ENCODE measurements at regions of chr1 and their contacts with region 1.

Region 1: GRCh38 chr1:93692983-93693591 is 11.4 kb upstream of the BCAR3 start:
- DNase-seq: peak; percentile 77
- H3K4me3 Mint-ChIP-seq: no peak overlapping the region
- H3K27ac Mint-ChIP-seq: peak overlapping the region; percentile 57
- H3K4me1 Mint-ChIP-seq: peaks cover 15% of the 10 kb centered on the region
- H3K27me3 Mint-ChIP-seq: peaks cover 11% of the 10 kb centered on the region

Region 2: GRCh38 chr1:93033785-93034184 is 659.3 kb before region 1 on chr1:
- CTCF ChIA-PET with region 1: no interaction called
- intact Hi-C with region 1: loop called (anchors 10 kb)
- DNase-seq: no peak
- H3K4me3 Mint-ChIP-seq: no peak overlapping the region
- H3K27ac Mint-ChIP-seq: no peak overlapping the region
- H3K4me1 Mint-ChIP-seq: peaks cover 29% of the 10 kb centered on the region
- H3K27me3 Mint-ChIP-seq: no peaks in the 10 kb centered on the region

Region 3: GRCh38 chr1:93471911-93472310 is 221.2 kb before region 1 on chr1:
- CTCF ChIA-PET with region 1: no interaction called
- intact Hi-C with region 1: no loop called
- DNase-seq: no peak
- H3K4me3 Mint-ChIP-seq: no peak overlapping the region
- H3K27ac Mint-ChIP-seq: no peak overlapping the region
- H3K4me1 Mint-ChIP-seq: no peaks in the 10 kb centered on the region
- H3K27me3 Mint-ChIP-seq: peaks cover 4% of the 10 kb centered on the region

Region 4: GRCh38 chr1:93607814-93608186 is 85.3 kb before region 1 on chr1:
- CTCF ChIA-PET with region 1: no interaction called
- intact Hi-C with region 1: loop called (anchors 1 kb)
- DNase-seq: peak; percentile 78
- H3K4me3 Mint-ChIP-seq: no peak overlapping the region
- H3K27ac Mint-ChIP-seq: no peak overlapping the region
- H3K4me1 Mint-ChIP-seq: peaks cover 25% of the 10 kb centered on the region
- H3K27me3 Mint-ChIP-seq: peaks cover 21% of the 10 kb centered on the region

Region 5: DNA sequence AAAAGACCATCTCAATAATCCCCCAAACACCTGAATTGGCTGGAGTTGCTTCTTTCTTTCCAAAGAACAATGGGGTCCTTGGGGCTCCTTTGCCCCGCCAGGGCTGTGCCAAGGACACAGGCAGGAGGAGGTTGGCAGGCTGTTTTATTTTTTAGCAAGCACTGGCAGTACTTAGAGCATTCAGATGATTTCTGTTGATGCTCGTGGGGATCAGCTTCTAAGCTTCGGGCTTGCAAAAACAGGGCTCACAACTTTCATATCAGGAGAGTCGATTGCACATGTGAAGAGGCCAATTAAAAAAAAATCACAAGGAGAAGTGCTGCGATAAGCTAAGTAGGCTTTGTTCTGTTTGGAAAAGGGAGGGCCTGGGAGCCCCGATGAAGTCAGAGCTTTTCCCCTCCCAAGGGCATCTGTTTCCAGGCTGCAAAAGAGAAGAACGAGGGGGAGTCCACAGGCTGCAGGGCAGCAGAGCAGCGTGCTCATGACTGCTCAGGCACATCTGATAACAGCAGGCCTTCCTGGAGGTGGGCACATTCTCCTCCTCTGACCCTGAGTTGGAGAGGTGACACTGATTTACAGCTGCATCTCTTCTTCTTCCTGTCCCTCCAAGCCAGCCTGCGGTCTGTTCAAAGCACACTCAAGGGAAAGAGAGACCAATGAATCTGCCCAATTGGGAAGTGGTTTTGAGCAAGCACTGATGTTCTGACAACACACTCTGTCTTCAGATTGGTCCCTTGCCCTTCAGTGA is 15.8 kb after region 1 on chr1:
- CTCF ChIA-PET with region 1: no interaction called
- intact Hi-C with region 1: loop called (anchors 1 kb)
- DNase-seq: peak; percentile 13
- H3K4me3 Mint-ChIP-seq: no peak overlapping the region
- H3K27ac Mint-ChIP-seq: no peak overlapping the region
- H3K4me1 Mint-ChIP-seq: peaks cover 27% of the 10 kb centered on the region
- H3K27me3 Mint-ChIP-seq: peaks cover 13% of the 10 kb centered on the region

Region 6: DNA sequence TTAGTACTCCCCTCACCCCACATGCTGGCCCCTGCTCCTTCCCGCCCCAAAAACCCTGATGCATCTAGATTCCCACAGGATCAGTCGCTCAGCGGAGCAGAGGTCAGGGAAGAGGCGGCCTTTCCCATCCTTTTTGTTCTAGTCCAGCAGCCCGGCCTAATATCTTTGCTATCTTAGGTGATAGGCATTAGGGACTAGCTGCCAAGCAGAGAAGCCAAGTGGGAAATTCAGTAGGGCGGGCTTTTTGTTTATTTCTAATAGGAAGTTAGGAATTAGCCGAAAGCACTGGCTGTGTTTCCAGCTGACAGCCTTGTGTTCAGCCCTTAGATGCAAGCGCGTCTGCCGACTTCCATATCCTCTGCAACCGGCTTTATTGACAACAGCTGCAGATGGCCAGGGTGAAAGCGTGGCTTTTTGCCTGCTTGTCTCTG is 47.5 kb after region 1 on chr1:
- CTCF ChIA-PET with region 1: no interaction called
- intact Hi-C with region 1: loop called (anchors 1 kb)
- DNase-seq: no peak
- H3K4me3 Mint-ChIP-seq: no peak overlapping the region
- H3K27ac Mint-ChIP-seq: no peak overlapping the region
- H3K4me1 Mint-ChIP-seq: peaks cover 18% of the 10 kb centered on the region
- H3K27me3 Mint-ChIP-seq: no peaks in the 10 kb centered on the region

Region 7: GRCh38 chr1:94039514-94039870 is 346.4 kb after region 1 on chr1:
- CTCF ChIA-PET with region 1: no interaction called
- intact Hi-C with region 1: loop called (anchors 1 kb)
- DNase-seq: peak; percentile 74
- H3K4me3 Mint-ChIP-seq: no peak overlapping the region
- H3K27ac Mint-ChIP-seq: no peak overlapping the region
- H3K4me1 Mint-ChIP-seq: peaks cover 15% of the 10 kb centered on the region
- H3K27me3 Mint-ChIP-seq: peaks cover 26% of the 10 kb centered on the region

Region 8: DNA sequence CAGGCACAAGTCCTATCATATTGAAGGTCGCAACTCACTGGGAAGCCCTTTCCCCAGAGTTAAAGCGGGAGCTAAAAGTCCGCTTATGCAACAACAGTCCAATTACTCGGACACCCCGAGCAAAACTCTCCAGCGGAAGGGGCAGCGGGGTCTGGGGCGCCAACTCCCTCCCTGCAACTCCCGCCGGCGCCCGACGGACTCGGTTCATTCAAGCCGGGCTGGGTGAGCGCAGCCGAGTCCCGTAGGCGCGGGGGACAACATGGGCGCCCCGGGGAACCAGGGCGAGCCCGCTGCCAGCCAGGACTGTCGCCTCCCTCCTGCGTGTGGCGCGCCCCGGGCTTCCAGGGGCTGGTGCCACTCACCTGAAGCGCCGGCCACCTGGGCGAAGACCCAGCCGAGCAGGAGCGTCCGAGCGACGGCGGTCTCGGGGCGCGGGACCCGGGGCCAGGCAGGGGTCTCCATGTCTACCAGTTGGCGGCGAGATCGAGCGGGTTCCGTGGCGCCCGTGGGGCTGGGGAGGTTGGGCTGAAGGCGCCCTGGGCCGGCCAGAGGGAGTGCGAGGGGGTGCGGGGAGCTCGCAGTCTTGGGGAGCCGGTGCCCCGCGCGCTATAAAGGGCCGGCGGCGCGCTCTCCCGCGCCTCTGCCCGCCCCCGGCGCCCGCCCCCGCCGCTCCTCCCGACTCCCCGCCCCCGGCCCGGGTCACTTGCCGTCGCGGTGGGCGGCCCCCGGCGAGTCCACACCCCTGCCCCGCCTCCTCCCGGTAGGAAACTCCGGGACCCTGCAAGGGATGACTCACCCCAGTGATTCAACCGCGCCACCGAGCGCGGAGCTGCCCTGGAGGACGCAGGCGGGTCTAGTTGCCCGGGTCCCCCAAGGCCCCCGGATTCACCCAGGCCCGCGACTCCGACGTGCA is 848.3 kb after region 1 on chr1 and contains the start of gene F3:
- CTCF ChIA-PET with region 1: no interaction called
- intact Hi-C with region 1: loop called (anchors 10 kb)
- DNase-seq: peak; percentile 89
- H3K4me3 Mint-ChIP-seq: peak within 1 kb of the TSS; percentile 72
- H3K27ac Mint-ChIP-seq: no peak within 1 kb of the TSS
- H3K4me1 Mint-ChIP-seq: peaks cover 14% of the 10 kb centered on the region
- H3K27me3 Mint-ChIP-seq: peaks cover 63% of the 10 kb centered on the region
- total RNA-seq, gene F3: 0.10 TPM in 1 of 2 experiments, not detected in the other